A549 (cell line): ENCODE measurements at regions of chr5 and their contacts with region 1.

Region 1: DNA sequence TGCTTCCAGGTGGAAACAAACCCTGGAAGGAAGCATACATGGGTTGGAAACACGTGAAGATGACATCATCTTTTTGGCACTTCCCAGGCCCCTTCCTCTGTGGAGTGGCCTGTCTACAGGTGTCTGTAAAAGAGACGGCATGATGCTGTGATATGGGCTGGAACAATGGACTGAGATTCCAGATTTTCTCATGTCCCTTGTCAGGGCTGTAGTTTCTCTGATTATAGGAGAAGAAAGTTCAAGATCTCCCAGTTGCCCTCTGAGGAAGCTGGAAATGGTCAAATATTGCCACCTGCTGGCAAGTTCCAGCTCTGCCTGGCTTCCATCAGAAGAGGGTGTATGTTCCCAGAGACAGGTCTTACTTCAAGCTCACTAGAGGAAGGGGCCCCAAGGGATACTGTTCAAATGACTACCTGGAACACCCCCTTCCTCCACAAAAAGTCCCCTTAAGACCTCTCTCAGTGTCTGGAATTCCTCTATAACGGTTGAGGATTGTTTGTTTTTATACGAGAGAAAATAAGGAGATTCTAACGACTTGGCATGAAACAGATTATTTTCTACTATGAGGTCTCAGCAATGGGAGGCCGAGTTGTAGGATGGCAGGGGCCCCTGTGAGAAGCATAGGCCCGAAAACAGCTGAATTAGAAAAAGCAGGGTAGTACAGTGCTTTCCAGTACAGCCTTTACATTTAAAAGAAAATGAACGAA is 7.3 kb upstream of the ANXA6 start:
- DNase-seq: peak; percentile 77 to 82
- ATAC-seq: peak; percentile 96 to 99
- H3K4me3 ChIP-seq: no peak overlapping the region
- H3K27ac ChIP-seq: no peak overlapping the region
- H3K4me1 ChIP-seq: no peaks in the 10 kb centered on the region
- CTCF ChIP-seq: peak; percentile 93
- EP300 ChIP-seq: no peak
- POLR2A ChIP-seq: no peak
- RAD21 ChIP-seq: peak; percentile 93 to 97

Region 2: GRCh38 chr5:151002250-151002649 is 162.6 kb before region 1 on chr5:
- CTCF ChIA-PET with region 1: interaction called, 48 read pairs
- POLR2A ChIA-PET with region 1: interaction called, 4 read pairs
- DNase-seq: peak; percentile 24 to 33
- ATAC-seq: peak; percentile 46 to 71; a peak in 3 of 6 replicates
- H3K4me3 ChIP-seq: no peak overlapping the region
- H3K27ac ChIP-seq: no peak overlapping the region
- H3K4me1 ChIP-seq: no peaks in the 10 kb centered on the region
- CTCF ChIP-seq: peak; percentile 56
- EP300 ChIP-seq: no peak
- POLR2A ChIP-seq: no peak
- RAD21 ChIP-seq: peak; percentile 71 to 85

Region 3: GRCh38 chr5:151037561-151038411 is 127.1 kb before region 1 on chr5:
- CTCF ChIA-PET with region 1: interaction called, 14 read pairs
- POLR2A ChIA-PET with region 1: no interaction called
- DNase-seq: no peak
- ATAC-seq: no peak
- H3K4me3 ChIP-seq: no peak overlapping the region
- H3K27ac ChIP-seq: peak overlapping the region in 1 of 2 experiments; percentile 13; a peak in 1 of 6 replicates
- H3K4me1 ChIP-seq: peaks cover 39% of the 10 kb centered on the region
- CTCF ChIP-seq: no peak
- EP300 ChIP-seq: no peak
- POLR2A ChIP-seq: no peak
- RAD21 ChIP-seq: no peak

Region 4: GRCh38 chr5:151080623-151081430 is 84.0 kb before region 1 on chr5 and contains the start of gene TNIP1:
- CTCF ChIA-PET with region 1: interaction called, 10 read pairs
- POLR2A ChIA-PET with region 1: no interaction called
- DNase-seq: peak; percentile 88 to 93
- ATAC-seq: peak; percentile 79 to 90
- H3K4me3 ChIP-seq: peak within 1 kb of the TSS; percentile 67
- H3K27ac ChIP-seq: peak within 1 kb of the TSS; percentile 91 to 98
- H3K4me1 ChIP-seq: peaks cover 72% of the 10 kb centered on the region
- CTCF ChIP-seq: no peak
- EP300 ChIP-seq: no peak
- POLR2A ChIP-seq: peak; percentile 46; the same call in 1 of the 2 replicates
- RAD21 ChIP-seq: no peak
- polyA plus RNA-seq, gene TNIP1: 43.4 and 48.4 TPM in 2 replicates

Region 5: DNA sequence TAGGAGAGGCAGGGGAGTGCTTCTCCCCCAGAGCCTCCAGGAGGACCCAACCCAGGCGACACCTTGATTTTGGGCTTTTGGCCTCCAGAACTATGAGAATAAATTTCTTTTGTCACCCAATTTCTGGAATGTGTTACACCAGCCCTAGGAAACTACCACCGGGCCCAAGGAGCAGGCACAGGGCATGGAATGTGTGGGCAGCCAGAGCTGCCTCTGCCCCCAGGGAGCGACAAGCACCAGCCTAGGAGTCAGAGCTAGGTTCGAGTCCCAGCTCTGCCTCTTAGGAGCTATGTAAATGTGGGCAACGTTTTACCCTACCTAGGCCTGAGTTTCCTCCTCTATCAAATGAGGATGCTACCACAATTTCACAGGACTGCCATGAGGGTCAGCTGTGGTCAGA is 60.7 kb before region 1 on chr5:
- CTCF ChIA-PET with region 1: no interaction called
- POLR2A ChIA-PET with region 1: no interaction called
- DNase-seq: no peak
- ATAC-seq: no peak
- H3K4me3 ChIP-seq: no peak overlapping the region
- H3K27ac ChIP-seq: 0 out of 6 replicates have a peak overlapping the region, but pooled peaks of 1 of the 2 experiments have one; percentile 5
- H3K4me1 ChIP-seq: peaks cover 7% of the 10 kb centered on the region; the same call in 2 of the 3 replicates
- CTCF ChIP-seq: no peak
- EP300 ChIP-seq: no peak
- POLR2A ChIP-seq: no peak
- RAD21 ChIP-seq: no peak

Region 6: DNA sequence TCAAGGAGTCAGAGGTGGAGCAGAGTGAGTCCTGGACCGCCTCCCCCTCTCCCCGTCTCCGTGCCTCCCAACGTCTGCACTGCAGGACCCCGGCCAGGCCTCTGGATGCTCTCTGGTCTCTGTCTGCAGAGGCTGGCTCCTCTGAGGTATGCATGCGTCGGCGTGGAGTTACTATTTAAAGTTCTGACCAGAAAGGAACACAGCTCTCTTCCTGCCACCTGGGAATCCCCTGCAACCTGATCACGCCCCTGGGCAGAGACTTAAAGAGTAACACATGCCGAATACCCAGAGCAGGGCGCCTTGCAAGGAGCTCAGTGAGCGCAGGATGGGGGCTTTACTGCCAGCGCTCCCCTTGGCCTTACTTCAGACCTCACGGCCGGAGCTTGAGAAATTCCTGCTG is 23.3 kb before region 1 on chr5:
- CTCF ChIA-PET with region 1: interaction called, 28 read pairs
- POLR2A ChIA-PET with region 1: no interaction called
- DNase-seq: no peak
- ATAC-seq: no peak
- H3K4me3 ChIP-seq: no peak overlapping the region
- H3K27ac ChIP-seq: no peak overlapping the region
- H3K4me1 ChIP-seq: no peaks in the 10 kb centered on the region
- CTCF ChIP-seq: no peak
- EP300 ChIP-seq: no peak
- POLR2A ChIP-seq: no peak
- RAD21 ChIP-seq: no peak

Region 7: DNA sequence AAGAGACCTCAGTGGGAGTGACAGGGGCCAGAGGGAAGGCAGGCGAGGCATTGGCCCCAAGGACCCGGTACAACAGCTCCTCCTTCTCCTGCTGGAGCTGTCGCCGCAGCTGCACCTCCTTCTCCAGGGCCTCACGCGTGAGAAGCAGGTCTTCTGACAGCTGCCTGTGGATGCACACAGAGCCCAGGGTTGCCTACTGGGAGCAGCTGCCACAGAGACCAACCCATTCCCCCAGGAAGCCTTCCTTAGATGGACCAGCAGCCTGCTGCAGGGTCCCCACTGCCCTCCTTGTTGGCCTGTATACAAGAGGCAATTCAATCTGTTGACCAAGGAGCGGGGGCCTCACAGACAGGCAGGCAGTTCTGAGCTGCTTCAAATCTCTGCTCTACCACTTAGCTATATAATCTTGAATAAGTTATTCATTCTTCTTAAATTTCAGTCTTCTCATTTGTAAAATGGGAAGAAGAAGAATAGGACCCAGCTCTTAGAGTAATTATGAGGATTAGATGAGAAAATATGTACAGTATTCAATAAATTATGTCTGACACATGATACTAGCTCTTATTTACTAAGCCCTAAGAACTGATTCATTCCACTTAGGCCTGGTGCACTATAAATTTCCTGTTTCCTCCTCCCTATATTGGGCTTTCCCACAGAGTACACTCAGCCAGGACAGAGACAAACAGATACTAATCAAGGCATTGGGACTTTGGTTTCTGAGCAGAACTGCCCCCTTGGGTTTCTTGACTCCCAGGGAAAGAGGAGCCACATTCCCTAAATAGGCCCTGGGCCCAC is 18.8 kb after region 1 on chr5:
- CTCF ChIA-PET with region 1: interaction called, 18 read pairs
- POLR2A ChIA-PET with region 1: no interaction called
- DNase-seq: no peak
- ATAC-seq: no peak
- H3K4me3 ChIP-seq: no peak overlapping the region
- H3K27ac ChIP-seq: no peak overlapping the region
- H3K4me1 ChIP-seq: no peaks in the 10 kb centered on the region
- CTCF ChIP-seq: no peak
- EP300 ChIP-seq: no peak
- POLR2A ChIP-seq: no peak
- RAD21 ChIP-seq: no peak

Region 8: DNA sequence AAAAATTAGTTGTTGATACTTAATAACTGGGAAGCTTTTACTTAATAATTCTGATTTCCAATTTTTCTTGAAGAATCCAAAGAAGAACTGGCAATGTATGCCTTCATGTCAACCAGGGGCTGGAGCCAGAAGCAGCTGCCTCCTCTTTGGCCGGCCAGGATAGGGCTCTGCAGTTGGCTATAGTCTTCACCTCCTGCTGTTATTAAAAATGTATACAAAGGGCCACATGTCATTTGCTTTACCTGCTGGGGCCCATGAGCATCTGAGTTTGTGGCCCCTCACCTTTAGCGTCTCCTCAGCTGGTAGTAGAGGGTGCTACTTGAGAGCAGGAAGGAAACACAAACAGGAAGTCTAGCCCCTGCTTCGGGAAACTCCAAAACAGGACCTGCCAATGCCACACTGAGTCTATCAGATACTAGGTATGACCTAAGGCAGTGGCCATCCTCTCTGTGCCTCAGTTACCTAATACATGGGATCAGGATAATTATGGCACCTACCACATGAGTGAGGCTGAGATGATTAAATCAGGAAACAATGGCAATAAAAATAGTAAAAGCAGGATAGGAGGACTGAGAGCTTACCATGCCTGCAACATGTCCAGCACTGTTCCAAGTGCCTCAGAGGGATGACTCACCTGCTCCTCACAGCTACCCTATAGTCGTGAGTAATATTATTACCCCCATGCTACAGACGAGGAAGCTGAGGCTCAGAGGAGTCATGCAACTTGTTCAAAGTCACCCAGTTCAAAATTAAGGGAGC is 37.7 kb after region 1 on chr5:
- CTCF ChIA-PET with region 1: interaction called, 10 read pairs
- POLR2A ChIA-PET with region 1: no interaction called
- DNase-seq: peak in 1 of 2 experiments; percentile 16
- ATAC-seq: peak; percentile 52 to 71; a peak in 3 of 6 replicates
- H3K4me3 ChIP-seq: no peak overlapping the region
- H3K27ac ChIP-seq: no peak overlapping the region
- H3K4me1 ChIP-seq: peaks cover 4% of the 10 kb centered on the region; the same call in 1 of the 3 replicates
- CTCF ChIP-seq: no peak
- EP300 ChIP-seq: no peak
- POLR2A ChIP-seq: no peak
- RAD21 ChIP-seq: no peak